Mammary epithelial cell (primary cell): ENCODE measurements at regions of chr1 and their contacts with region 1.

Region 1: DNA sequence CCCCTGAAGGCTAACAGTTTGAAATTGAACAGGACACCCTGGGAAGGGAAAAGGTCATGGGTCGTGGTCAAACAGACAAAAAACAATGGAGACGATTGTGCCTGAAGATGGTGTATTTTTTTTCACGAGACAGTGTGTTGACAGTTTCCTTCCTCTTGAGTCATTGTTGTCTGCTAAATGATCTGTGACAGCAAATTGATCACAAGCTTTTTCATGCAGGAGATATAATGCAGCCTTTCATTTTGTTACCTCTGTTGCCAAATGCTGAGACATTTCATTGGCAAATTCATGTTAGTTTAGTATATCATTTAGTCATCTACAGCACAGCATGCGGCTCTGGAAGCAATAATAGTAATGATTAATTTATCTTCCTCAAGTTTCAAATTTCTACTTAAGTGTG is 27.7 kb downstream of the UBE2U start:
- DNase-seq: peak; percentile 60
- H3K4me3 ChIP-seq: no peak overlapping the region
- H3K27ac ChIP-seq: no peak overlapping the region
- H3K4me1 ChIP-seq: peaks cover 5% of the 10 kb centered on the region
- H3K27me3 ChIP-seq: no peaks in the 10 kb centered on the region
- CTCF ChIP-seq: no peak

Region 2: DNA sequence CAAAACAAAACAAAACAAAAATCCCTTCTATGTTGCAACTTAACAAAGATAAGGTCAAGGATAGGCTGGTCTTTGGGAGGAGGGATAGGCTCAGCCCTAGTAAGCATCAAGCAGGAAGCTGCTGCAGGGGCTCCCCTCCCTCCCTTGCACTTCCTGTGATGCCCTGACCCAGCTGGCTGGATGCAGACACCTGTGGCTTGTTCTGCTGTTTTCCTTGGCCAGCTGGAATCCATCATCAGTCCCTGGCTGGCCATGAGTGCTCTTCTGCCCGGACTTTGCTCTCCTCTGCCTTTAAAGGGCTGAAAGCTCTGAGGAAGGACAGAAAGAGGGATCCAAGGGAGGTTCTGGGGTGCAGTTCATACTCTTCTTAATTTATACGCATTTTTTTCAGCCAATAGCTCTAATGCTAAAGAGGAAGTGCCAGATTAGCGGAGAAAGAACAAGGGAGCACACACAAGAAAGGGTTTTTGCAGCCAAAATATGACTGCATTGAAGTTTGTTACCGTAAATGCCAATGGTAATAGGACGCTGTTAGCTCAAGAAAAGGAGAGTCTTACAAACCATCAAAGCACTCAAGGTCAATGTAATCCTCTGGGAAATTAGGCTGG is 47.7 kb before region 1 on chr1:
- CTCF ChIA-PET with region 1: no interaction called
- dilution Hi-C with region 1: no loop called
- in situ Hi-C with region 1: no loop called
- intact Hi-C with region 1: loop called (anchors 10 kb)
- DNase-seq: no peak
- H3K4me3 ChIP-seq: no peak overlapping the region
- H3K27ac ChIP-seq: no peak overlapping the region
- H3K4me1 ChIP-seq: no peaks in the 10 kb centered on the region
- H3K27me3 ChIP-seq: no peaks in the 10 kb centered on the region
- CTCF ChIP-seq: no peak